ENCODE measurements at regions of chr7 and their contacts with region 1.

Region 1: DNA sequence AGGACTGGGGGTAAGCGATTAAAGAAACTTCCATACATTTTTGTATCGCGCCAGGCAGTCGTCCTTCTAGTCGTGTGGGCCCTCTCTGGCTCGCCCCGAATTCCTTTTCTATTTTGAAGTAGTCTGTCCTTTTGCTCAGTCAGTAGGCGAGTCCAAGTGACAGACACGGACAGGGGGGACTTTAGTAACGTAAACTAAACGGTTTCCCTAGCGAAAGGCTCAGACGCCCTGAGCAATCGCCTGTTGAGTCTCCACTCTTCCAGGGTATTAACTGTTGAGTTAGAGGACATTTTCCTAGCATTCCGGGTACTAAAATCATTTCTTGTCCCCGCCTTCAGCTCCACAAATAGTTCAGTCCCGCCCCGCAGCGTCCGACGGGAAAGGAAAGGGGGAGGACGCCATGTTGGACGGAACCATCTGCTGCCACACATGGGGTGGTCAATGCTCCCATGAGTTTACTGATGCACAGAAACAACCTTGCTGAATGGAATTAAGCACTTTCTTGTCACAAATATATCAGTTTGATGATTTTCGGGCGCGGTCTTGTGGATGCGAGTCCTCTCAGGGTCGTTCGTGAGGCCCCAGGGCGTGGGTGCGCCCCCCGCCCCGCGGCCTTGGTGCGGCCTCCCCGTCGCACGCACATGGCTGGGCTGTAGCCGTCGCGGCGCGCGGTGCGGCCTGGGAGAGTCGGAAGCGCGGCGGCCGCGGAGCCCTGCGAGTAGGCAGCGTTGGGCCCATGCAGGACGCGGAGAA is at the start of gene EIF3B:
- DNase-seq: peak; percentile 81 to 96 (median 88)
- ATAC-seq: peak; percentile 86
- H3K4me3 ChIP-seq: peak within 1 kb of the TSS; percentile 85
- H3K4me3 Mint-ChIP-seq: peak within 1 kb of the TSS; percentile 92
- H3K27ac ChIP-seq: peak within 1 kb of the TSS; percentile 99 to 100
- H3K27ac Mint-ChIP-seq: peak within 1 kb of the TSS; percentile 100
- H3K4me1 ChIP-seq: peaks cover 53% of the 10 kb centered on the region
- H3K4me1 Mint-ChIP-seq: peaks cover 37% of the 10 kb centered on the region
- H3K27me3 ChIP-seq: no peaks in the 10 kb centered on the region
- H3K27me3 Mint-ChIP-seq: no peaks in the 10 kb centered on the region
- CTCF ChIP-seq: no peak
- total RNA-seq, gene EIF3B: 166 to 167 TPM

Region 2: DNA sequence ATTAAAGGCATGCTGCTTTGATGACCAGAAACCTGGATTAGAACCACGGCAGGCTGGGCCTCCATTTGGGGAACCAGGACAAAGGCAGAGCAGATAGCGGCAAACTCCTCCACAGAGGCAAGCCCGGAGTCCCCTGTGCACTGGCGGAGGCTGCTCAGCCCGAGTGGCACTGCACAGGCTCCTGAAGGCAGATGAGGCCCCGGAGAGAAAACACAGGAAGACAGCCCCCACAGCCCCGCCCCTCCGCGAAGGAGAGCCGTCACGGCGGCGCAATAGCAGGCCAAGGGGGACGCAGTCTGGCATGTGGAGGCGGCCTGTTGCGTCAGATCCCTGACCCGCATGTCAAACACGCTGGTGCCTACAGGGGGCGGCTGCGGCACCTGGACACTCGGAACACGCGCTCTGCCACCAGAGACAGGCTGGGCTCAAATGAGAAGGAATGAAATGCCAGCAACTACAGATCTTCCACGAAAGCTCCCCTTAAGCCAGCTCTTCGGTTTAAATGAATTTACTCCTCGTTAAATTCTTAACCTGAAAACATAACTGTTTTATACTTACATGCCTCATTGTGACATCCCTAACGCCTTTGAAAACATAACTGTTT is 250.2 kb before region 1 on chr7:
- CTCF ChIA-PET with region 1: no interaction called
- POLR2A ChIA-PET with region 1: no interaction called
- intact Hi-C with region 1: loop called (anchors 5 kb)
- DNase-seq: peak; percentile 28 to 81 (median 58)
- ATAC-seq: peak; percentile 59
- H3K4me3 ChIP-seq: peak overlapping the region; percentile 7
- H3K4me3 Mint-ChIP-seq: peak overlapping the region; percentile 25
- H3K27ac ChIP-seq: no peak overlapping the region
- H3K27ac Mint-ChIP-seq: peak overlapping the region; percentile 63
- H3K4me1 ChIP-seq: peaks cover 17% of the 10 kb centered on the region
- H3K4me1 Mint-ChIP-seq: peaks cover 33% of the 10 kb centered on the region
- H3K27me3 ChIP-seq: no peaks in the 10 kb centered on the region
- H3K27me3 Mint-ChIP-seq: no peaks in the 10 kb centered on the region
- CTCF ChIP-seq: peak; percentile 44

Region 3: GRCh38 chr7:2157468-2158279 is 196.7 kb before region 1 on chr7:
- CTCF ChIA-PET with region 1: no interaction called
- POLR2A ChIA-PET with region 1: no interaction called
- intact Hi-C with region 1: no loop called
- DNase-seq: no peak
- ATAC-seq: no peak
- H3K4me3 ChIP-seq: no peak overlapping the region
- H3K4me3 Mint-ChIP-seq: no peak overlapping the region
- H3K27ac ChIP-seq: no peak overlapping the region
- H3K27ac Mint-ChIP-seq: no peak overlapping the region
- H3K4me1 ChIP-seq: no peaks in the 10 kb centered on the region
- H3K4me1 Mint-ChIP-seq: no peaks in the 10 kb centered on the region
- H3K27me3 ChIP-seq: no peaks in the 10 kb centered on the region
- H3K27me3 Mint-ChIP-seq: no peaks in the 10 kb centered on the region
- CTCF ChIP-seq: no peak

Region 4: GRCh38 chr7:2241580-2242540 is 112.5 kb before region 1 on chr7 and contains the starts of genes MRM2 and NUDT1:
- CTCF ChIA-PET with region 1: no interaction called
- POLR2A ChIA-PET with region 1: interaction called, 11 read pairs
- intact Hi-C with region 1: loop called in 1 of 2 experiments (anchors 2 kb)
- DNase-seq: peak; percentile 19 to 80 (median 59)
- ATAC-seq: peak; percentile 54
- H3K4me3 ChIP-seq: peak within 1 kb of the TSS; percentile 94
- H3K4me3 Mint-ChIP-seq: peak within 1 kb of the TSS; percentile 95
- H3K27ac ChIP-seq: peak within 1 kb of the TSS; percentile 28 to 46
- H3K27ac Mint-ChIP-seq: peak within 1 kb of the TSS; percentile 88
- H3K4me1 ChIP-seq: peaks cover 26% of the 10 kb centered on the region
- H3K4me1 Mint-ChIP-seq: peaks cover 17% of the 10 kb centered on the region
- H3K27me3 ChIP-seq: no peaks in the 10 kb centered on the region
- H3K27me3 Mint-ChIP-seq: no peaks in the 10 kb centered on the region
- CTCF ChIP-seq: no peak
- total RNA-seq, gene MRM2: 3.6 to 3.7 TPM
- total RNA-seq, gene NUDT1: 12.8 to 13.0 TPM

Region 5: GRCh38 chr7:2403014-2403717 is 48.8 kb after region 1 on chr7 and contains the start of gene CHST12:
- CTCF ChIA-PET with region 1: no interaction called
- POLR2A ChIA-PET with region 1: interaction called, 27 read pairs
- intact Hi-C with region 1: loop called in 1 of 2 experiments (anchors 1 kb)
- DNase-seq: peak; percentile 90 to 99 (median 93)
- ATAC-seq: peak; percentile 76
- H3K4me3 ChIP-seq: peak within 1 kb of the TSS; percentile 76
- H3K4me3 Mint-ChIP-seq: peak within 1 kb of the TSS; percentile 88
- H3K27ac ChIP-seq: peak within 1 kb of the TSS; percentile 35 to 38
- H3K27ac Mint-ChIP-seq: peak within 1 kb of the TSS; percentile 82
- H3K4me1 ChIP-seq: peaks cover 57% of the 10 kb centered on the region
- H3K4me1 Mint-ChIP-seq: peaks cover 54% of the 10 kb centered on the region
- H3K27me3 ChIP-seq: no peaks in the 10 kb centered on the region
- H3K27me3 Mint-ChIP-seq: no peaks in the 10 kb centered on the region
- CTCF ChIP-seq: no peak
- total RNA-seq, gene CHST12: 6.6 to 8.6 TPM

Measured in CD4-positive, alpha-beta T cell (primary cell).